ENCODE measurements at regions of chr7 and their contacts with region 1.

Region 1: DNA sequence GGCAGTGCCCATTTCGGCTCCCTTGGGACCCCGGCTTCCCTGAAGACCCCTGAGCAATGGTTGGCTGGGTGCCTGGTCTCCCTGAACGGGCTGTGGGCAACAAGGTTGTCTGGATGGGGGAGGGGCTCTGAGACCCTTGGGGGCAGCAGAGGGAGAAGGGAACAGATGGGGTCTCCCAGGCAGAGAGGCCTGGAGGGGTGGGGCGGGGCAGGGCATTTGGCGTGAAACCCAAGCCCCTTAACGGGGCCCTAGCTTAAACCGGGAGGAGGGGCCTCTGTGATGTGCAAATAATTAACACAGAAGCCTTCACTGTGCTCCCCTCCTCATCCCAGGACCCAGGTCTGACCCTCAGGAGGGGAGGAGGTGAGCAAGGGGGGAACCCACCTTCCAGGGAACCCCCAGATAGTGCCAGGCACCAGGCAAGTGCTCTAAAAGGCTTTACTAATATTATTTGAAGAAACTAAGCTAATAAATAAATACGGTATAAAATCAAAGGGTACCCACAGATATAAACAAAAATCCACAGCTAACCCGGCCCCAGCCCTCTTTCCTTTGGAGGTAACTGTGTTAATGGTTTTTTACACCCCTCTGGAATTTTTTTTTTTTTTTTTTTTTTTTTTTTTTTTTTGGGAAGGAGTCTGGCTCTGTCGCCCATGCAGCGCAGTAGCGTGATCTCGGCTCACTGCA is 170.8 kb downstream of the RNF216 start:
- DNase-seq: no peak
- ATAC-seq: no peak
- H3K4me3 ChIP-seq: no peak overlapping the region
- H3K27ac ChIP-seq: no peak overlapping the region
- H3K4me1 ChIP-seq: 0 out of 2 replicates have a peak, but pooled peaks cover 7% of the 10 kb centered on the region
- H3K27me3 ChIP-seq: no peaks in the 10 kb centered on the region
- CTCF ChIP-seq: no peak

Region 2: DNA sequence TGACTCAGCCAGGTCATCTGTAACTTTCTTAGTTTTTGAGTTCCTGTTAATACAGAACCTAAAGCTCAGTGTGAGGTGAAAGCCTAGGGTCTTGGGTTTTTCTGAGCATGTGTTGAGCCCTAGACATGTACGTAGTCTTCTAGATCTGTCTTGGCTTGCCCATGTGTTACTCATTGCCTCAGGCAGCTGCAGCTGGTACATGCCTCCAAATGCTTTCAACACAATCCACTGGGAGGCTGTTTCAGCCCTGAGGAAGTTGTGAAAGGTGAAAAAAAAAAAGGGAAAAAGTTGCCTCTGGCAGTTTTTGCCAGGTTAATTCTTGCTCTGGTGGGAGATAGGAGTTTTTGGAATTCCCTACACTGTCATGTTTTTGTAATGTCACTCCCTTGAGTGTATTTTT is 36.2 kb after region 1 on chr7:
- CTCF ChIA-PET with region 1: no interaction called
- POLR2A ChIA-PET with region 1: interaction called, 14 read pairs
- in situ Hi-C with region 1: no loop called
- intact Hi-C with region 1: no loop called
- DNase-seq: no peak
- ATAC-seq: no peak
- H3K4me3 ChIP-seq: no peak overlapping the region
- H3K27ac ChIP-seq: no peak overlapping the region
- H3K4me1 ChIP-seq: no peaks in the 10 kb centered on the region
- H3K27me3 ChIP-seq: no peaks in the 10 kb centered on the region
- CTCF ChIP-seq: no peak

Region 3: DNA sequence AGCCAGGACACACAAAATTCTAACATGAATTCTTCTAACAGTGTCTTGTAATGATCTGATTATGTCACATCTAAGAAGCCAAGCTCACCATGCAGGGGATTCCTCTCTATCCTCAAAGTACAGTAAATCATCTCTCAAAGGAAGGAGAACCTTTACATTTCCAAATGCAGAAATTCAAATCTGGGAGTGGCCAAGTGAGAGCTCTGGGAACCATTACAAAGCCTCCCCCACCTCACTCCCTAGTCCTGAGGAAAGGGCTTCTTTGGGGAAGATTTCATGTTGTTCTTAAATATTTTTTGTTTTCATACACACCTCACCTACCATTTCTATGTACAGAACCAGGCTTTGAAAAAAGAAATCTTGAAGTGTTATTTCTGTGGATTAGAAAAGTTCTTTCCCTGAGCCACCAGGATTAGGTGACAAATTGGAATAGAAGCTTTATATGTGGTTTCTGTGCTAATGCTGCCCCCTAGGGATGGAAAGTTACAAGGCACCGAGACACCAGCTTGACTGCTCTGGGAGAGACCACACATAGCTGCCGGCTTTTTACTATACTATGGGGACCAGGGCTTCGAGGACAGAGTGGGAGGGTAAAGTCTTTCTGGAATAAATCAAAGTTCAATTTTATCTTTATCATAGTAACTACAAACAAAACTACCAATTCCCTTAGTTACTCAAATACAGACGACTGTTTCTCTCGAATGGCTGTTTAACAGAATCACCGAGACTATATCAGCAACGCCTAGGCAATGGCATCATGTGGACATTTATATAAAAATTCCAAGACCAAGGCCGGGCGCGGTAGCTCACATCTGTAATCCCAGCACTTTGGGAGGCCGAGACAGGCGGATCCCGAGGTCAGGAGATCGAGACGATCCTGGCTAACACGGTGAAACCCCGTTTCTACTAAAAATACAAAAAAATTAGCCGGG is 54.7 kb after region 1 on chr7:
- CTCF ChIA-PET with region 1: interaction called, 10 read pairs
- POLR2A ChIA-PET with region 1: no interaction called
- in situ Hi-C with region 1: no loop called
- intact Hi-C with region 1: no loop called
- DNase-seq: peak; percentile 61
- ATAC-seq: peak; percentile 84
- H3K4me3 ChIP-seq: no peak overlapping the region
- H3K27ac ChIP-seq: no peak overlapping the region
- H3K4me1 ChIP-seq: no peaks in the 10 kb centered on the region; the same call in 1 of the 2 replicates
- H3K27me3 ChIP-seq: no peaks in the 10 kb centered on the region
- CTCF ChIP-seq: peak; percentile 96